Gastrocnemius medialis (tissue), 4 donors: ENCODE measurements at regions of chr1 and their contacts with region 1.

Region 1: DNA sequence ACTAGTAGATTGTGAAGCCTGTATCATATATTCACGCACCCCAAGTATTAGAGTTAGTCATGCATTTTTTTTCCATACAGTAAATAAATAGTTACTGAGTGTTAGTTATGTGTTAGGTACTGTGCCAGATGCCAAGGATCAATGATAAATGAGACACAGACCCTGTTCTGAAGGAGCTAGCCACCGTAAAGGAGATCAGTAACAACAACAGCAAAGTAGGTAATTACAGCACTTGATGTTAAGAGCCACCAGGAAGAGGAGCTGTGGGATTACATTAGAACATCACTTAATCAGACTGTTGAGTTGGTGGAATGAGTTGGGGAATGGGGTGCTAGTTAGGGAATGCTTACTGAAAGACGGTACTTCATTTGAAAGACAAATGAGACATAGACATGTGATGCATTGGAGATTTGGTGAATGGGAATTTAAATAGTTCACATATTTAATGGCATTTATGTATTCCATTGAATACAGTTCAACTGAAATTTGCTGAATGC is 21.0 kb downstream of the PRKAA2 start:
- DNase-seq: no peak
- ATAC-seq: no peak
- H3K4me3 ChIP-seq: no peak overlapping the region
- H3K27ac ChIP-seq: no peak overlapping the region
- H3K4me1 ChIP-seq: peaks cover 28 to 43% of the 10 kb centered on the region in 2 donors
- H3K27me3 ChIP-seq: no peaks in the 10 kb centered on the region
- CTCF ChIP-seq: no peak
- POLR2A ChIP-seq: no peak

Region 2: GRCh38 chr1:56634981-56635380 is 31.2 kb before region 1 on chr1:
- in situ Hi-C with region 1: no loop called
- intact Hi-C with region 1: loop called (anchors 1 kb)
- DNase-seq: no peak
- ATAC-seq: no peak
- H3K4me3 ChIP-seq: no peak overlapping the region
- H3K27ac ChIP-seq: no peak overlapping the region
- H3K4me1 ChIP-seq: no peaks in the 10 kb centered on the region
- H3K27me3 ChIP-seq: no peaks in the 10 kb centered on the region
- CTCF ChIP-seq: no peak
- POLR2A ChIP-seq: no peak